ENCODE measurements at regions of chr11 and their contacts with region 1.

Region 1: DNA sequence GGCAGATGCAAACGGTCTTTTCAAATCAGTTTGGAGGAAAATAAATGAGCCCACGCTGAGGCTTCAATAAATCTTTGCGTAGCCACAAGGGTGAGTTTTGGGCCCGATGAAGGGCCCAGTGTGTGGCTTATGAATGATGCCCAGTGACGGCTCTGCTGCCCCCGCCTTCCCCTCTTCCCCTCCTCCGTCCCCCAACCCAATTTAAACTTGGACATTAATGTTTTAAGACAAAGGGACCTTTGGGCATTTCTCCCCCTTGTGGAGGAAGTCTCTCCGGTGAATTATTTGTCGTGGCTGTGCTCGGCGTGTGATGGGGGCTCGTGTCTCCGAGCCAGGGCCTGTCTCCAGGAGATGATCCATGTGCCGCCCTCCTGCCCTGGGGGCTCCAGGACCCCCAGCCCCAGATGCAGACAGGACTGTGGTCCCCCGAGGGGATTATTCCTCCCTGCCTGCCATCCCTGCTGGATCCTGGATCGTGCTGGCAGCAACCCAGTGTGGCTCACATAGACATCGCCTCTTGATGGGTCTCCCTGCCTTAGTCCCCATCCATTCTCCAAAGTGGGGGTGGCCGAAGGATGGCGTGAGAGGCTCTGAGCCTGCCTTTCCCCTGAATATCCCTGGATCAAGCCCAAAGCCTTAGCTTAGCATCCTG is 56.3 kb downstream of the SMIM38 start:
- DNase-seq: no peak
- ATAC-seq: no peak
- H3K4me3 Mint-ChIP-seq: no peak overlapping the region
- H3K27ac Mint-ChIP-seq: no peak overlapping the region
- H3K4me1 Mint-ChIP-seq: peaks cover 27% of the 10 kb centered on the region
- H3K27me3 Mint-ChIP-seq: peaks cover 8% of the 10 kb centered on the region

Region 2: DNA sequence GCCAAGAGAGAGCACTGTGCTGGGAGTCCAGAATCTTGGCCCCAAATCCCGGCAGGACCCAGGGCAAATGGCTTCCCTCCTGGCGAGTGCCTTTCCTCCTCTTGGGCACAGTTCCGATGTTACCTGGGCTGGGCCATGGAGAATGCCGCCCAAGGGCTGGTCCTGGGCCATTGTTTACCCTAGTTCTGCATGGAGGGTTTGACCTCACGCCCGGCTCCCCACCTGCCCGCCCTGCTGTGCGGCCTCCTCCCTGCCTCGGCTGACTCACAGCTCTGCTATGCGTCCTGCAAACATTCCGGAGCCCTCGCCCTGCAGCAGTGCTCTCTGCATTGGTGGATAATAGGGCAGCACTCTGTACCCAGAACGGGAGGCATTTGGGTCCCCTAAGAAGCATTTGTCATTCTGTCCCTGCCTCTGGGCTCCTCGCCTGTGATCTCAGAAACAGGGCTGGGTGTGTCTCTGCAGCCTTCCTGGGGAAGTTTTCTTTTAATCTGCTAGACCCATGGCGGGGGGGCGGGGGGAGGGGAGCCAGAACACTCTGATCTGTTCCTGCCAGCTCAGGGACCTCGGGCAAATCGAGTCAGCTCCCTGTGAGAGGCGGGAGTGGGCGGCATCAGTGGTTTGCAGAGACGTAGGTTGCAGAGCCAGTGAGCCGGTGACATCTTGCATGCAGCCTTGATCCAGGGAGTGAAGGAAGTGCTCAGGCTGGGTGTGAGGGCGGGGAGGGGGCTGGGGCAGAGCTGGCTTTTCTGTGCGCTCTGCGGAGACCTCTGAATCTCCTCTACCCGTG is 89.2 kb before region 1 on chr11:
- CTCF ChIA-PET with region 1: no interaction called
- POLR2A ChIA-PET with region 1: no interaction called
- intact Hi-C with region 1: loop called in 1 of 2 experiments (anchors 1 kb)
- DNase-seq: peak; percentile 91
- ATAC-seq: peak; percentile 91
- H3K4me3 Mint-ChIP-seq: peak overlapping the region; percentile 12
- H3K27ac Mint-ChIP-seq: peak overlapping the region; percentile 19
- H3K4me1 Mint-ChIP-seq: peaks cover 41% of the 10 kb centered on the region
- H3K27me3 Mint-ChIP-seq: no peaks in the 10 kb centered on the region

Region 3: GRCh38 chr11:69166218-69167115 is 45.6 kb before region 1 on chr11:
- CTCF ChIA-PET with region 1: no interaction called
- POLR2A ChIA-PET with region 1: no interaction called
- intact Hi-C with region 1: loop called (anchors 1 kb)
- DNase-seq: peak; percentile 77
- ATAC-seq: peak; percentile 99
- H3K4me3 Mint-ChIP-seq: no peak overlapping the region
- H3K27ac Mint-ChIP-seq: peak overlapping the region; percentile 77
- H3K4me1 Mint-ChIP-seq: peaks cover 18% of the 10 kb centered on the region
- H3K27me3 Mint-ChIP-seq: no peaks in the 10 kb centered on the region

Region 4: DNA sequence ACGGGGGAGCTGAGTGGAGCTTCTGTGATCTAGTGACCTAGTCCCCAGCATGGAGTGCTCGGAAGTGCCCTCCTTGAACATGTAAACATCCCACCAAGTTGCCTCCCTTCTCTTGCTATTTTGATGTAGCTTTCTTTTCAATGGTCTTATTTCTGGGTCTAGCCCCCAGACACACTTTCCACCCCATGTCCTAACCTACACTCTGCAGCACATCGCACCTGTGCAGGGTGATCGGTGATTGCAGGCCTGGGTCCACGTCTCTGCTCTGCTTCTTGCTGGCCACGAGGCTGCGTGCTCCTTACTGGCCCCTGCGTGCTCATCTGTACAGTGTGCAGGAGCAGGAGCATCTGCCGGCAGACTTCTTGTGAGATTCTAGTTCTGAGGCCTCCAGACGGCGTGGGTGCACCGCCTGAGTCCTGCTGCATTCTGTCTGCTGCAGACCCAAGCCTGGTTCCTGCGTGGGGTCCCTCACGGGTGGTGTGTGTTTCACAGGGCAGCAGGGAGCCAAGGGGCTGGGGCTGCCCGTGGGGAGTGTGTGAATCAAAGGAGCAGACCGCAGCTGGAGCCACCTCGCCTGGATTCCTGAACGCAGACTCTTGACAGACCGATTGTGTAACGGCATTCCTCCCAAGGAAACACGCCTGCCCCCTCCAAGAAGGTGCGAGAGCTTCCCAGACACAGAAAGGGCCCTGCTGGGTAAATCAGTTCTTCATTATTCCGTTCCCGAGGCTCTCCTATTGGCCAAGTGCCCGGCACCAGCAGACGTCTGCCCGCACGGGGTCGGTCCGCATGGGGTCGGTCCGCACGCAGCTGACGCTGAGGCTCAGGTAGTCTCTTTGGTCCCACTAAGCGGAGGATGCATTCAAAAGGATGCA is 37.5 kb after region 1 on chr11:
- CTCF ChIA-PET with region 1: no interaction called
- POLR2A ChIA-PET with region 1: no interaction called
- intact Hi-C with region 1: no loop called
- DNase-seq: no peak
- ATAC-seq: no peak
- H3K4me3 Mint-ChIP-seq: no peak overlapping the region
- H3K27ac Mint-ChIP-seq: no peak overlapping the region
- H3K4me1 Mint-ChIP-seq: no peaks in the 10 kb centered on the region
- H3K27me3 Mint-ChIP-seq: peaks cover 2% of the 10 kb centered on the region

Region 5: DNA sequence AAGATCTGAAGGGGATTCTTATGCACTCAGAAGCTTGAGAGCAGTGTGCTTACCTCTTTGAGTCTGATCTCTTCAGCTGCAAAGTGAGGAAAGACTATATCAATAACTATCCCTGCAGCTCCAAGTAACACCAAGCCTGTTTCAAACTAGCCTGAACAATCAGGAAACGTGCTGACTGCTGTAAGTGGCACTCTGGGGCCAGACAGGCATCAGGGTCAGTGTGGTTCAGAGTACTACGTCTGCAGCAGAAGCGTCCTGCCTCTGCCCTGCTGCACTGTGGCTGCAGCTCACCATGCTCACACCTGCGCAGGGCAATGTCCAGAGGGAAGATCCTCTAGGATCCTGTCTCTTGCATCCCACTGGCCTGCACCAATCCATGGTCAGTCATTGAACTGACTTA is 243.9 kb after region 1 on chr11:
- CTCF ChIA-PET with region 1: no interaction called
- POLR2A ChIA-PET with region 1: no interaction called
- intact Hi-C with region 1: loop called in 1 of 2 experiments (anchors 5 kb)
- DNase-seq: no peak
- ATAC-seq: no peak
- H3K4me3 Mint-ChIP-seq: no peak overlapping the region
- H3K27ac Mint-ChIP-seq: no peak overlapping the region
- H3K4me1 Mint-ChIP-seq: no peaks in the 10 kb centered on the region
- H3K27me3 Mint-ChIP-seq: peaks cover 9% of the 10 kb centered on the region